ENCODE measurements at regions of chr17 and their contacts with region 1.

Region 1: GRCh38 chr17:42527273-42527703 is 8.8 kb upstream of the NAGLU start:
- DNase-seq: peak; percentile 66 to 84
- H3K4me3 ChIP-seq: no peak overlapping the region
- H3K4me1 ChIP-seq: 0 out of 2 replicates have a peak, but pooled peaks cover 2% of the 10 kb centered on the region
- H3K27me3 ChIP-seq: no peaks in the 10 kb centered on the region

Region 2: GRCh38 chr17:42428141-42428944 is 98.9 kb before region 1 on chr17:
- in situ Hi-C with region 1: loop called (anchors 10 kb)
- DNase-seq: peak; percentile 61 to 78
- H3K4me3 ChIP-seq: no peak overlapping the region
- H3K4me1 ChIP-seq: peaks cover 17% of the 10 kb centered on the region
- H3K27me3 ChIP-seq: no peaks in the 10 kb centered on the region

Measured in HAP-1 (cell line).